ENCODE measurements at regions of chr12 and their contacts with region 1.

Region 1: DNA sequence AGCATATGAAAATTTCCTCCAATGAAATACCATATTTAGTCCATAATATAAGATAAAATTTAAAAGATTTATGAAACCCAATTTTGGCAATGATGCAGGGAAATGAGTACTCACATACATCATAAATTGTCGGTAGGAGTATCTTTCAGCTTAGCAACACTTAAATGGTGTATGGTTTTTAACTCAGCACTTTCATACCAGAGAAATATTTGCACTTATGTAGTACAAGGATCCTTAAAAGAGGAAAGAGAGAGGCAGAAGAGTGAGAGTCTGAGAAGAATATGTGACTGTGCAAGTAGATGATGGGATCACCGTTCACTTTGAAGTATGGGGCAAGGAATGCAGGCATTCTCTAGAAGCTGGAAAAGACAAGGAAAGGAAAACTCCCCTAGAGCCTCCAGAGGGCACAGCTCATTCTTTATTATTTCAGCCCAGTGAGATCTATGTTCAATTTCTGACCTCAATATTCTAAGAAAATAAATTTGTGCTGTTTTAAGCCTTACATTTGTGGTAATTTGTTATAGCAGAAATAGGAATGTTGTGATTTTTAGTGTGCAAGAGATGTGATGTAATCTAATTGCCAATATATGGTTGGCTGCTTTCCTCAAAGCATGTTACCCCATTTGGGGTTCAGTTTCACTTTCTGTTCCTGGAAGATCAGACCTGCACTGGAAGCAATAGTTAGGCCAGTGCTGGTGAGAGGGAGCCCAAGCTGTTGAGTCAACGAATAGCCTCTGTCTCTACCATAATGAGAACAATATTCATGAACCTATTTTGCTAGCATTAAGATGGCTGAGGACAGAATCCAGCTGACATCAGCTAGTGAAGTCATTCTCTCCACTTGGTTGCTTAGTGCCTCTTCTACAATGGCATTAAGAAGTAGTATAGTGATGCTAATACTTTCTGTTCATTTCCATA is 379.6 kb upstream of the DCN start:
- DNase-seq: no peak
- H3K4me3 ChIP-seq: no peak overlapping the region
- H3K27ac ChIP-seq: no peak overlapping the region
- H3K4me1 ChIP-seq: no peaks in the 10 kb centered on the region
- H3K27me3 ChIP-seq: no peaks in the 10 kb centered on the region
- CTCF ChIP-seq: no peak
- POLR2A ChIP-seq: no peak

Region 2: DNA sequence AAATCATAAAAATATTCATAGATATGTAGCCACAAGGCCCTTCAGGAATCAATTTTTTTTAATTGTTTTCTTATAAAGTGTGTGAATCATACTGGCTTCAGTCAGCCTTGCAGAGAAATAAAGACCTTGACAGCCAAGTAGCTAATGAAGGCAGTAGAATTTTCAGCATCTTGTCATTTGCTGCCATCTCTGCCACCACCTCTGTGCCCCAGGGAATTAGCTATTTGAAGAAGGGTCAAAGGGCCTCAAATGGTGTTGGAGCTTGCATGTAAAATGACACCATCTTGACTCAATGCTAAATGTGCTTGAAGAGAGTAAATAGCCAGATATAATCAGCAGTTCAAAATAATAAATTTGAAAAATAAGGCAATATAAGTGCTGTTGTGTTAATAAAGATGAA is 20.1 kb before region 1 on chr12:
- intact Hi-C with region 1: loop called (anchors 2 kb)
- DNase-seq: no peak
- H3K4me3 ChIP-seq: no peak overlapping the region
- H3K27ac ChIP-seq: no peak overlapping the region
- H3K4me1 ChIP-seq: no peaks in the 10 kb centered on the region
- H3K27me3 ChIP-seq: no peaks in the 10 kb centered on the region
- CTCF ChIP-seq: no peak
- POLR2A ChIP-seq: no peak